ENCODE measurements at regions of chr5 and their contacts with region 1.

Region 1: GRCh38 chr5:156686796-156687195 is 163.3 kb upstream of the PPP1R2B start:
- DNase-seq: no peak
- ATAC-seq: peak in 3 of 4 donors; percentile 43 to 57 (median 50)
- H3K4me3 ChIP-seq: no peak overlapping the region
- H3K27ac ChIP-seq: peak overlapping the region in 10 of 12 donors; percentile 8 to 83 (median 69)
- H3K4me1 ChIP-seq: peaks cover 0 to 47% (median 10%) of the 10 kb centered on the region in 12 donors
- H3K27me3 ChIP-seq: no peaks in the 10 kb centered on the region
- CTCF ChIP-seq: no peak
- POLR2A ChIP-seq: no peak

Region 2: DNA sequence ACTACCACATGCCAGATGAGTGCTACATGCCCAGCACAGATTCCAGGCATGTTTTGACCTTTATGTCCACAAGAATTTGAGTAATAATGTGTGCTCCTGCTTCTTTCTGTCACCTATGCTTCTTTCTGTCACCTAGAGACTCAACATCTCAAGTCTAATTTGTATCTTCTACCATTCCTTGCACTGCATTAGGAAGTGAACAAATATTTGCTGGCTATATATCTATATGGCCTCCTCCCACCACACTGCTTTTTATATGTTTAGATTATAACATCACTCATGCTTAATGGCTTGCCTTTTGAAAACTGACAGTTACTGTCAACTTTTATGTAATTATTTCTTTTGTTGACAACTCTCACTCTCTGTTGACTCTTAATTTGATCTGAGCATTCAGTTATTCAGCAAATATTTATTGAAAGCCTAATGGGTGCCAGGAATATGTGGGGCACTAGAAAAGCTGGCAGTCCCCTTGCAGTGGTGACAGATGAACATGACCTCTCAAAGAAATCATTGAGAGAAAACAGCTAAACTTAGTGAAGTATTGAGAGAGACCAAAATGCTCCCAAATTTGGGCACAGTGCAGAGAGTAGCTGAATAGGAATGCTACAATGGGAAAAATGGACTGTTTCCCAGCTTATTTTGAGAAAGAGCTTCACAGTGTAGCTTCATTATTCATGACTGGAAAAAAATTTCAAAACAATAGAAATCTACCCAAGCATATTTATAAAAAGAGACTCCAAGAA is 102.1 kb before region 1 on chr5:
- intact Hi-C with region 1: loop called in 1 of 10 experiments (anchors 10 kb)
- DNase-seq: peak in 2 of 5 donors; percentile 31 to 35
- ATAC-seq: peak; percentile 34 to 77 (median 47)
- H3K4me3 ChIP-seq: no peak overlapping the region
- H3K27ac ChIP-seq: peak overlapping the region; percentile 45 to 89 (median 82)
- H3K4me1 ChIP-seq: peaks cover 0 to 64% (median 11%) of the 10 kb centered on the region in 12 donors
- H3K27me3 ChIP-seq: no peaks in the 10 kb centered on the region
- CTCF ChIP-seq: no peak
- POLR2A ChIP-seq: no peak

Region 3: DNA sequence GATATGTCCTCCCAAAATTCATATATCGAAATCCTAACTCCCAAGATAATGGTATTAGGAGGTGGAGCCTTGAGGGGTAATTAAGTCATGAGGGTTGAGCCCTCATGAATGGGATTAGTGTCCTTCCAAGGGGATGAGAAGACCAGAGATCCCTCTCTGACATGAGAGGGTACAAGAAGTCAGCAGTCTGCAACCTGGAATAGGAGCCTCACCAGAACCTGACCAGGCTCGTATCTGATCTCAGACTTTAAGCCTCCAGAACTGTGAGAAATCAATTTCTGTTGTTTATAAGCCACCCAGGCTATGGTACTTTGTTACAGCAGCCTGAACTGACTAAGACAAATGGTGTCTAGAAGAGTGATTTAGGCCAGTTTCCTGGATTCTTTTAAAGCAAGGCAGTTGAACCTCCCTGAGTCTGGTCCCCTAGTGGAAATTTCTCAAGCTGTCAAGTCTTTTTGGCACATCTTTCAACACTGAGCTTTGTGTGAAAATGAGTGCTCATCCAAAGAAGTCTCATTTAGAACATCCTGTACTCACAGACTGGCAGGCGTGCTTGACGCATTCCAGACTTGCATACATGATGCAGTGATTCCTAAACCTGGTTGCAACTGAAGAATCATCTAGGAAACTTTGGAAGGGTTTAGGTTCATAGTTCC is 91.5 kb before region 1 on chr5:
- intact Hi-C with region 1: loop called in 3 of 10 experiments (anchors 5 kb)
- DNase-seq: peak; percentile 40 to 89 (median 62)
- ATAC-seq: peak; percentile 93 to 97 (median 94)
- H3K4me3 ChIP-seq: no peak overlapping the region
- H3K27ac ChIP-seq: peak overlapping the region; percentile 52 to 88 (median 78)
- H3K4me1 ChIP-seq: peaks cover 0 to 31% (median 9%) of the 10 kb centered on the region in 12 donors
- H3K27me3 ChIP-seq: no peaks in the 10 kb centered on the region
- CTCF ChIP-seq: peak in 6 of 12 donors; percentile 6 to 29 (median 16)
- POLR2A ChIP-seq: no peak

Region 4: DNA sequence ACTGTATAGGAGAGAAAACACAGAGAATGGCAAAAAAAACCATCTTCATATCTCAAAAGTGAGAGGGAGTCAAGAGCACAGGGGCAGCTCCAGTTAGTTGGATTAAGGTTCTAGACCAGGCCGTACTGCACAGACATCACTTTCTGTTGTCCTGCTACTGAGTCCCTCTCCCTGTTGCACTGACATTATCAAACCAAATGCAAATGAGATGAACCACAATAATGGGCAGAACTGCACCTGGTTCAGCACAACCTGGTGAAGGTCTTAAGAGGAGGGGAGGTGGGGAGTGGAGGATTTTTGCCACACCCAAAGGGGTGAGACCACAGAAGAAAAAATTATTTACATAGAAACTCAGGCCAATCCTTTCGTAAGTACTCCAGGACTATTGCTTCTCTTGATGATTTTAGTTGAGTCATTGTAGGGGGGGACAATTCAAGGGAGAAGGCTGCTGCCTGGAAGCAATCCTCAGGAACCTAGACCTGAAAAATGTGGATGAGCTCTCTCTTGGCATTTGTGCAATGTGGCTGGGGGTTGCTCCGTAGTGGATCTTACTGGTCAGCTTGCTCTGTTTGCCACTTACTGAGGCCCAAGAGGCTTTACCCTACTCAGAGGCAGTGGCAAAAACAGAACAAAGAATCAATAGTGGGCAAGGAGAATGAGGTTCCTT is 68.8 kb after region 1 on chr5:
- intact Hi-C with region 1: loop called in 1 of 10 experiments (anchors 5 kb)
- DNase-seq: no peak
- ATAC-seq: no peak
- H3K4me3 ChIP-seq: no peak overlapping the region
- H3K27ac ChIP-seq: peak overlapping the region in 1 of 12 donors; percentile 2
- H3K4me1 ChIP-seq: peaks cover 0 to 22% (median 0%) of the 10 kb centered on the region in 12 donors
- H3K27me3 ChIP-seq: no peaks in the 10 kb centered on the region
- CTCF ChIP-seq: no peak
- POLR2A ChIP-seq: no peak

Measured in heart left ventricle (tissue), 16 donors.